AG04449 (cell line): ENCODE measurements at regions of chr1 and their contacts with region 1.

Region 1: GRCh38 chr1:155172732-155173477 is at the start of gene KRTCAP2:
- DNase-seq: peak; percentile 75
- H3K4me3 ChIP-seq: peak within 1 kb of the TSS; percentile 98
- CTCF ChIP-seq: peak; percentile 96

Region 2: DNA sequence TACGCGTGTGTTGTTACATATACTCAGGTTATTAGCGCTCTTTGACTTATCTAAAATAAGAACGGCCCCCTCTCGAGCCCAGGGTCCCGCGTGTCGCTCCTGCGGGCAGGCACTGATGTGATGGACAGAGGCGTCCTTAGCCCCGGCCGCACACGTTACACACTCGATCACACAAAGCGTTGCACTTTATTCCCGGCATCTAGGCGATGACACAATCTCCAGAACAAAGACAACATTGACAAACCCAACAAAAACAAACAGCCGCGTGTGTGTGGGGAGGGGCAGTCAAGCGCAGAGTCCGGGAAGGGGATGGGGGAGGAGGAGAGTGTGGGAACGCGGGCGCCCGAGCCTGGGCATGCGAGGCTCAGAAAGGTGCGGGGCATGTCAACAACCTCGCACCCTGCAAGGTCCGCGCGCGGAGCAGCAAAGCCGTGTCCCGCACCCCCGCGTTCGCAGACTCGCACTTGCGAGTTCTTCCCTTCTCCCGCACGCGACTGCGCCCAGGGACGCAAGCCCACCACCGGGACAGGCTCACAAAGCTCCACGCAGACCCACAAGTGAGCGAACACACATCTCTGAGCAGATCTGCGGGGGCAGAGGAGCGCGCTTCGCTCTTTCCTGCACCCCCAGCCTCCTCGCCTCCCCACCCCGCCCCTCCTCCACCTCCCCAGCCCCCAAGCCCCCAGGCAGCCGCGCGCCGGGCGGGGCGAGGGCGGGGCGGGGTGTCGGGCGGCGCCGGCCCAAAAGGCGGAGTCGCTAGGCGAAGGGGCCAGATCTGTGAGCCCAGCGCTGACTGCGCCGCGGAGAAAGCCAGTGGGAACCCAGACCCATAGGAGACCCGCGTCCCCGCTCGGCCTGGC is 45.6 kb before region 1 on chr1 and contains the start of gene EFNA1:
- CTCF ChIA-PET with region 1: interaction called, 11 read pairs
- POLR2A ChIA-PET with region 1: interaction called, 4 read pairs
- DNase-seq: no peak
- H3K4me3 ChIP-seq: peak within 1 kb of the TSS; percentile 53
- CTCF ChIP-seq: no peak

Region 3: DNA sequence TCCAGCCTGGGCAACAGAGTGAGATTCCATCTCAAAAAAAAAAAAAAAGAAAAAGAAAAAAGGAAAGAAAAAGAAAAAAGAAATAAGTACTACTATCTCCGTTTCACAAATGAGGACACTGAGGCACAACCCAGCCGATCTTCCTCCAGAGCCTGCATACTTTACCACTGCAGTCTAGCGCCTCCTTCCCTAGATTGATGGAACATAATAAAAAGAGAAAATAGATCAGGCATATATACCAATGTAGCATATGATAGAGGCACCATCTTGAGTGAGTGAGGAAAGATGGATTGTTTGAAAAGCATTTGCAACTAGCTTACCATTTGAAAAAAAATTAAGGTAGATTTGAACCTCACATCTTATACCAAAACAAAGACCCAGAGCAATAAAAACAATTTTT is 27.4 kb before region 1 on chr1:
- CTCF ChIA-PET with region 1: interaction called, 16 read pairs
- POLR2A ChIA-PET with region 1: no interaction called
- DNase-seq: no peak
- H3K4me3 ChIP-seq: no peak overlapping the region
- CTCF ChIP-seq: no peak

Region 4: DNA sequence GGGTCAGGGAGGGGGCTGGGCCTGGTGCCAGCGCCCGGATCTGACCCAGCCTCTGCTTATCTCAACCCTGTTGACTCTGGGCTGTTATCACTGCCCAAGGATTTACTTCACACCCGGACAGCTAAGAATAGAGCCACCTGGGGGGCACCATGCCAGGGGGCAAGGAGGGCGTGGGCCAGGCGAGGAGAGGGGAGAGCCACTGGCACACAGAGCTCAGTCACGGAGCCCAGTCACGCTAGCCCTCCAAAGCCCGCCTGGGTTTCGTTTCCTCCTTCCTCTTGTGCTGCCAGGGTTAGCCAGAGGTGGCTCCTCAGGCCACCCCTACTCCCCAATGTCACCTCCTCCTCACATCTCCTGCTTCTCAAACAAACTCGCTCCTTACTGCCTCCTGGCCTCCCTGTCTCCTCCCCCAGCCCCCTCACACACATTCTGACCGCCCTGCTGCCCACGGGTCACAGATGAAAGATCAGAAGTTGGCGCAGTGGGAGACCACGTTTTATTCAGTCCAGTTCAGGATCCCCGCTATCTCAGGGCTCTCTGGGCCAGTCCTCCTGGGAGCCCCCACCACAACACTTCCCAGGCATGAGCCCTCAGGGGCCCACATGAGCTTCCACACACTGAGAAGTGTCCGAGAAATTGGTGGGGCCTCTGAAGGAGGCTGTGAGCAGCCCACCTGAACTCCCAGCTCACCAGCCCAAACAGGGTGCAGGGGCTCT is 12.6 kb after region 1 on chr1:
- CTCF ChIA-PET with region 1: interaction called, 50 read pairs
- POLR2A ChIA-PET with region 1: interaction called, 3 read pairs
- DNase-seq: no peak
- H3K4me3 ChIP-seq: no peak overlapping the region
- CTCF ChIP-seq: no peak

Region 5: GRCh38 chr1:155208541-155209311 is 35.8 kb after region 1 on chr1 and contains the start of gene MTX1:
- CTCF ChIA-PET with region 1: interaction called, 25 read pairs
- POLR2A ChIA-PET with region 1: no interaction called
- DNase-seq: no peak
- H3K4me3 ChIP-seq: peak within 1 kb of the TSS; percentile 89
- CTCF ChIP-seq: no peak